PC-9 (cell line): ENCODE measurements at regions of chr2 and their contacts with region 1.

Region 1: DNA sequence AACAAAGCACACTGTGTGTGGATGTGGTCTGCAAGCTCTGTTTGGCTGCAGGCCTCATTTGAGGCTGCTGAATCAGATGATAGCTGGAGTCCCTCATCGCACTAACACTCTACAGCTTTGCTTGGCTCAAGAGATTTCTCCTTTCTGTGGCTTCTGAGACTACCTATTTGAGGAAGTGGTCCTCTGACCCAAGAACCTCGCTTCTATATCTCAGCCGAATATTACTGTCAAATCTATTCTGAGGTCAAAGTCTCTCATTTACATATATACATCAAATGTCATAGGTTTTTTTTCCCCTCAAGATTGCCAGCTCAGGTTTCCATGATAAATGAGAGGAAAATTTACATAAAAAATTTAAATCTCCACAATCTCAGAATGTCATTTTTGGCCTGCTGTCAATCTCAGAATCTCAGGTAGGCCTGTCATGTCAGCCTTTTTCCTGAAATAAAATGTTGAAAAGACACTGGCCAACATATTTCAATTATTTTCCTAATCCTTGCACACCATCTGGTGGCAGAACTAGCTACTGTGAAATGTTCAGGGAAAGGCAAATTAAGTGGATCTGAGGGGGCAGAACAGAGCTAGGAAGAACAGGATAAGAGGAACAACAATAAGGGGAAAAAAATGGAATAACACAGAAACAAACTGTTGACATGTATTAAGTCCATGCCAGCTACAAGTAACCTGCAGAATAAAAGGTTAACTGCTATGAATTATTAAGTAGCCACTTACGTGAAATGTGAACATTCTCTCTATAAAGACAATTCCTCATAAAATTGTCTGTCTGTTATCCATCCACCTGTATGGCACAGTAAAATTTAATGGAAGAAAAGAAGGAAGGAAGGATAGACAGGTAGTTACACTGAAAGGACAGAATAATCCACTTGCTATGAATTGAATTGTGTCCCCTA is 39.3 kb downstream of the AP1S3 start:
- DNase-seq: peak; percentile 46 to 73
- H3K4me3 ChIP-seq: no peak overlapping the region
- H3K27ac ChIP-seq: peak overlapping the region; percentile 95
- H3K4me1 ChIP-seq: peaks cover 76% of the 10 kb centered on the region
- H3K27me3 ChIP-seq: no peaks in the 10 kb centered on the region
- CTCF ChIP-seq: peak; percentile 95

Region 2: DNA sequence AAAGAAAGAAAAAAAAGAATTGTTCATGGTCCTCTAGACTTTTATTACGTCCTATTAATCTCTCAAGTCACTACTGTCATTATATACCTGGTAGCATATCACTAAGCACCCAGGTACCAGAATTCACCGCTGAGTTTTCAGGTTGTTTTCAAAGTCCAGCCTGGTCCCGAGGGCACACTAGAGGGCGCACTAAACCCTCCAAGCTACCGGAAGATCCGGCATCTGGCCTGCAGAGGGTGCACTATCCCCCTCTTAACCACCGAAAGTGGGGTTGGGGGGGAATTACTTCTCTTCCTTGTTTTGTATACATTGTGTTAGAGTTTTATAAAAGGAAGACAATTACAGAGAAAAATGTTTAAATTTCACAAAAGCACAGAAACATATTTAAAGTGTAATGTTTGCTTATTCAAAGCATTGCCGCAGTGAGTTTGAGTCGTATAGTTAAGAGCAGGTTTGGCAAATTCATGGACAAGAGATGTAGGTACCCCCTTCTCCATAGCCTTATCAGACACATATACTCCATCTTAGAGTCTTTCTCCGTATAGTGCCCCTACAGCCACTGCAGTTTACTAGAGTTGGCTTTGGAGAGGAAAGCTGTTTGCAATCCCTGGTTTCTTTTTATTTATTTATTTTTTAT is 1107.4 kb before region 1 on chr2:
- CTCF ChIA-PET with region 1: no interaction called
- POLR2A ChIA-PET with region 1: no interaction called
- intact Hi-C with region 1: loop called (anchors 2 kb)
- DNase-seq: peak; percentile 80 to 87
- H3K4me3 ChIP-seq: no peak overlapping the region
- H3K27ac ChIP-seq: no peak overlapping the region
- H3K4me1 ChIP-seq: no peaks in the 10 kb centered on the region
- H3K27me3 ChIP-seq: no peaks in the 10 kb centered on the region
- CTCF ChIP-seq: peak; percentile 100

Region 3: GRCh38 chr2:223101340-223102039 is 696.6 kb before region 1 on chr2:
- CTCF ChIA-PET with region 1: no interaction called
- POLR2A ChIA-PET with region 1: no interaction called
- intact Hi-C with region 1: loop called (anchors 1 kb)
- DNase-seq: peak in 1 of 2 experiments; percentile 51
- H3K4me3 ChIP-seq: no peak overlapping the region
- H3K27ac ChIP-seq: no peak overlapping the region
- H3K4me1 ChIP-seq: peaks cover 5% of the 10 kb centered on the region; the same call in 1 of the 2 replicates
- H3K27me3 ChIP-seq: no peaks in the 10 kb centered on the region
- CTCF ChIP-seq: peak; percentile 86

Region 4: GRCh38 chr2:223404616-223405015 is 393.4 kb before region 1 on chr2:
- CTCF ChIA-PET with region 1: no interaction called
- POLR2A ChIA-PET with region 1: no interaction called
- intact Hi-C with region 1: loop called (anchors 10 kb)
- DNase-seq: no peak
- H3K4me3 ChIP-seq: no peak overlapping the region
- H3K27ac ChIP-seq: no peak overlapping the region
- H3K4me1 ChIP-seq: no peaks in the 10 kb centered on the region
- H3K27me3 ChIP-seq: no peaks in the 10 kb centered on the region
- CTCF ChIP-seq: no peak

Region 5: DNA sequence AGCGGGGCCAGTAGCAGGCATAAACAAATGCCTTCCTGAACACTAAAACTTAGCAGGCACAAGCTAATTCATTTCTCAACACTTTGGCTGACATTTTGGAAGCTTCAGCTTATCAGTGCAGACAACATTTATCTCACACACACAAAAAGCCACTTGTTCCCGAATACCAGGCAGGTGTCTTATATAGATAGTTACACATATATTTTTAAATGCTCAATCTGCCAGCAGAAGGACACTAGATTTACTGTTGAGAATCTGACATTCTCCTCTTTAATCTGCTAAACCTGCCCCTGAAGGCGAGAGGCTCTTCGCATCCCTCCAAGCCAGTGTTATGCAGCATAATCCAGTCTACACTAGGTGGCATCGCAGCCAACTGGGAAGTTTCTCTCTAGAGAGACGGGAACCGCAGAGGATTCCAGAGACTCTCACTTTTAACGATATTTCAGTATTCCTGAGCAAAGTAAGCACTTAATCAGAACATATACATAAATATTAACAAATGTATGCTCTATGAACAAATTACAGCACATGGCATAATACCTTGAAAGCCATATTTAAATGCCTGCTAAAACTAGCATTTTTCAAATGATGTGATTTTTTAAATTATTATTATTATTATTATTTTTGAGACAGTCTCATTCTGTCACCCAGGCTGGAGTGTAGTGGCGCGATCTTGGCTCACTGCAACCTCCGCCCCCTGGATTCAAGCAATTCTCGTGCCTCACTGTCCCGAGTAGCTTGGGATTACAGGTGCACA is 105.7 kb before region 1 on chr2:
- CTCF ChIA-PET with region 1: interaction called, 5 read pairs
- POLR2A ChIA-PET with region 1: interaction called, 4 read pairs
- intact Hi-C with region 1: loop called (anchors 1 kb)
- DNase-seq: peak in 1 of 2 experiments; percentile 60
- H3K4me3 ChIP-seq: no peak overlapping the region
- H3K27ac ChIP-seq: no peak overlapping the region
- H3K4me1 ChIP-seq: peaks cover 15% of the 10 kb centered on the region
- H3K27me3 ChIP-seq: no peaks in the 10 kb centered on the region
- CTCF ChIP-seq: peak; percentile 79

Region 6: DNA sequence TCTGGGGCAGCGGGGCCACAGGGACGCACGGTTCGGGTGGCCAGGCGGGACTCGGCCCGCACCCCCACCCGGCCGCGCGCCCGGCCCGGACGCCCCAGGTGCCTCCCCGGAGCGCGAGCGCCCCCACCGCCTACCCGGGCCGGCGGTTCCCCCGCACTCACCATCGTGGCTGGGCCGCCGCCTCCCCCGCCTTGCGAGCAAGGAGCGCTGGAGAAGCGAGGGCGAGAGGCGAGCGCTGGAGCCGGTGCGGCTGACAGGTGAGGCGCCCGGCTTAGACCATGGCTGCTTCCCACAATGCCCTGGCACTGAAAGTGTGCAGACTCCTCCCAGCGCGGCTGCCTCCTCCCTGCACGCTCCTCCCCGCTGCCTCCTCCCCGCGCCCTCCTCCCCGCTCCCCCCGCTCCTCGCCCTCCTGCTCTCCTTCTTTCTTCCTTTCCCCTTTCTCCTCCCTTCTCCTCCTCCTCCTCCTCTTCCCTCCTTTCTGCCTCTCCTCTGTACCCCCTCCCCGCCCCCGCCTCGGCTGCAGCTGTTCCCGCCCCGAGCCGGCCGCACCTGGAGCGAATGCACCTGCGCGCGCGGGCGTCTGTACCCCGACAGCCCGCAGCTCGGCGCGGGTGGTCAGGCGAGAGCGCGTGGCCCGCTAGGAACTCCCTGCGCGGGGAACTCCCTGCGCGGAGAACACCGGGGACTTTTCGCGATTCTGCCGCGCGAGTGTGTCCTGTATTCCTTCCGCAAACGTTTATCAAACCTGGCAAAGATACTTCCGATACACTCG is 39.4 kb after region 1 on chr2 and contains the start of gene AP1S3:
- CTCF ChIA-PET with region 1: interaction called, 5 read pairs
- POLR2A ChIA-PET with region 1: interaction called, 7 read pairs
- intact Hi-C with region 1: loop called (anchors 1 kb)
- DNase-seq: peak; percentile 88 to 97
- H3K4me3 ChIP-seq: peak within 1 kb of the TSS; percentile 89
- H3K27ac ChIP-seq: peak within 1 kb of the TSS; percentile 80
- H3K4me1 ChIP-seq: peaks cover 33% of the 10 kb centered on the region
- H3K27me3 ChIP-seq: no peaks in the 10 kb centered on the region
- CTCF ChIP-seq: no peak; the same call in 1 of the 2 replicates
- total RNA-seq, gene AP1S3: 61.3 and 73.3 TPM in 2 replicates

Region 7: DNA sequence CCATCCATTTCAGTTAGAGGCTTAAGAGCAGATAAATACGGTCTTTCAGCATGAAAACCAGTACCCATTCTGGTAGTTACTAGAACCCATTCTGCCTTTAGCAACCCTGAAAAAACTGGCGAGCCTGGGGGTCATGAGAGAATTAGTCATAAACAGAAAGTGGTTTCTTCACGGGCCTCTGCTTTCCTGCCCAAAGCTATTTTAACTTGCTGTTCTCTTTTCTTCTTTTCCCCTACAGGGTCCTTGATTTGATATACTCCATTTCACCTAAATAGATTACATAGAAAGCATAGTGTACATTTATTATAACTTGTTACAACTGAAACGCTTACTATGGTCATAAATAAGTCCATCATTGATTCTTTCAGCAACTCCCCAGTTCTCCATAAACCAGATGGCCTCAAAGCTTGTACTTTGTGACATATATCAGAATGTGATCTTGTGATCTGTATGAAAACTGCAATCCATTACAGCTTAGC is 98.8 kb after region 1 on chr2:
- CTCF ChIA-PET with region 1: no interaction called
- POLR2A ChIA-PET with region 1: no interaction called
- intact Hi-C with region 1: no loop called
- DNase-seq: no peak
- H3K4me3 ChIP-seq: no peak overlapping the region
- H3K27ac ChIP-seq: no peak overlapping the region
- H3K4me1 ChIP-seq: peaks cover 9% of the 10 kb centered on the region; the same call in 1 of the 2 replicates
- H3K27me3 ChIP-seq: no peaks in the 10 kb centered on the region
- CTCF ChIP-seq: no peak

Region 8: DNA sequence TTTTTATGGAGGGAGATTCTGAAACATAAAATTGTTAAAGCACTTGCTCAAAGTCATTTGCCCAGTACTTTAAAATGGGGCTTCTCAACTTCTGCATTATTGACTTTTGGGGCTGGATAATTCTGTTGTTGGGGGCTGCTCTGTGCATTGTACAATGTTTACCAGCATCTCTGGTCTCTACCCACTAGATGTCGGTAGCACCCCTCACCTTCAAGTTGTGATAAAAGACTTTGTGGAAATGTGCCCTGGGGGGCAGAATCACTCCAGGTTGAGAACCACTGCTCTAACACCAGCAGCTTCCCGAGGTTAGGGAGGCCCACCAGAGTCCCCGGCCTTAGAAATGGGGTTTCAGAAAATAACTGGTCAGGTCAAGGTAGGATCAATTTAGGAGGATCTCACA is 813.9 kb after region 1 on chr2:
- CTCF ChIA-PET with region 1: no interaction called
- POLR2A ChIA-PET with region 1: no interaction called
- intact Hi-C with region 1: no loop called
- DNase-seq: no peak
- H3K4me3 ChIP-seq: no peak overlapping the region
- H3K27ac ChIP-seq: no peak overlapping the region
- H3K4me1 ChIP-seq: peaks cover 7% of the 10 kb centered on the region; the same call in 1 of the 2 replicates
- H3K27me3 ChIP-seq: no peaks in the 10 kb centered on the region
- CTCF ChIP-seq: 0 out of 2 replicates have a peak, but pooled peaks have one; percentile 7